Ovary (tissue), 10 donors: ENCODE measurements at regions of chr15 and their contacts with region 1.

Region 1: GRCh38 chr15:78822514-78822913 is 11.2 kb upstream of the ADAMTS7 start:
- DNase-seq: no peak
- H3K4me3 ChIP-seq: no peak overlapping the region
- H3K27ac ChIP-seq: no peak overlapping the region
- H3K4me1 ChIP-seq: peaks cover 5% of the 10 kb centered on the region
- H3K27me3 ChIP-seq: no peaks in the 10 kb centered on the region
- CTCF ChIP-seq: no peak
- EP300 ChIP-seq: no peak
- POLR2A ChIP-seq: no peak

Region 2: GRCh38 chr15:77347208-77347607 is 1475.3 kb before region 1 on chr15:
- intact Hi-C with region 1: loop called in 1 of 4 experiments (anchors 5 kb)
- DNase-seq: no peak
- H3K4me3 ChIP-seq: no peak overlapping the region
- H3K27ac ChIP-seq: no peak overlapping the region
- H3K4me1 ChIP-seq: no peaks in the 10 kb centered on the region
- H3K27me3 ChIP-seq: no peaks in the 10 kb centered on the region
- CTCF ChIP-seq: no peak
- EP300 ChIP-seq: no peak
- POLR2A ChIP-seq: no peak

Region 3: GRCh38 chr15:77695961-77696582 is 1126.4 kb before region 1 on chr15:
- intact Hi-C with region 1: no loop called
- DNase-seq: peak in 3 of 5 donors; percentile 20 to 48 (median 21)
- H3K4me3 ChIP-seq: no peak overlapping the region
- H3K27ac ChIP-seq: no peak overlapping the region
- H3K4me1 ChIP-seq: no peaks in the 10 kb centered on the region
- H3K27me3 ChIP-seq: no peaks in the 10 kb centered on the region
- CTCF ChIP-seq: no peak
- EP300 ChIP-seq: no peak
- POLR2A ChIP-seq: no peak

Region 4: GRCh38 chr15:78618490-78618934 is 204.0 kb before region 1 on chr15:
- intact Hi-C with region 1: no loop called
- DNase-seq: peak; percentile 81 to 89 (median 83)
- H3K4me3 ChIP-seq: no peak overlapping the region
- H3K27ac ChIP-seq: no peak overlapping the region
- H3K4me1 ChIP-seq: peaks cover 2% of the 10 kb centered on the region
- H3K27me3 ChIP-seq: no peaks in the 10 kb centered on the region
- CTCF ChIP-seq: peak; percentile 54 to 88 (median 86)
- EP300 ChIP-seq: no peak
- POLR2A ChIP-seq: no peak

Region 5: GRCh38 chr15:80179025-80179759 is 1356.7 kb after region 1 on chr15:
- intact Hi-C with region 1: no loop called
- DNase-seq: no peak
- H3K4me3 ChIP-seq: no peak overlapping the region
- H3K27ac ChIP-seq: no peak overlapping the region
- H3K4me1 ChIP-seq: peaks cover 5% of the 10 kb centered on the region
- H3K27me3 ChIP-seq: no peaks in the 10 kb centered on the region
- CTCF ChIP-seq: no peak
- EP300 ChIP-seq: no peak
- POLR2A ChIP-seq: no peak